ENCODE measurements at regions of chr4 and their contacts with region 1.

Region 1: GRCh38 chr4:101037938-101038413 is 309.4 kb downstream of the PPP3CA start:
- DNase-seq: peak in 1 of 2 donors; percentile 14
- ATAC-seq: peak in 7 of 8 donors; percentile 46 to 94 (median 80)
- H3K4me3 ChIP-seq: no peak overlapping the region
- H3K27ac ChIP-seq: peak overlapping the region in 2 of 10 donors; percentile 20 to 40
- H3K4me1 ChIP-seq: peaks cover 0 to 20% (median 11%) of the 10 kb centered on the region in 9 donors
- H3K27me3 ChIP-seq: no peaks in the 10 kb centered on the region
- CTCF ChIP-seq: no peak

Region 2: DNA sequence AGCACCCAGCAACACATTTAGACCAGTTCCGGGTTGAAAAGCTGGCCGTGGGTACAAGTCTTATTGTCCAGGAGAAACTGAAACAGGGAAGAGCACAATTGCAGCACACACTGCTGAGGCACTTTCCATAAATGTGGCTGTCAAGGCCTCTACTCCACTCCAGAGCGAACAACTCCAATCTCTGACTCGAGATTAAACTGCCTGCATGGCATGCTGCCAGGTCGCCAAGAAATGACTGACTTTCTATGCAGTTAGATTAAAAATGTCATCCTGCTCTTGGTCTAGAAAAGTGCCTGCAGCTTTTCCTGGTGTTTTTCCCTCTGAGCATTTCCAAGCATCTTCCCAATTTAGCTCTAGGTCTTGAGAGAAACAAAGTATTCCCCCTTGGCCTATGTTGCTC is 259.5 kb before region 1 on chr4:
- intact Hi-C with region 1: loop called in 1 of 10 experiments (anchors 5 kb)
- DNase-seq: no peak
- ATAC-seq: no peak
- H3K4me3 ChIP-seq: no peak overlapping the region
- H3K27ac ChIP-seq: no peak overlapping the region
- H3K4me1 ChIP-seq: no peaks in the 10 kb centered on the region
- H3K27me3 ChIP-seq: no peaks in the 10 kb centered on the region
- CTCF ChIP-seq: no peak

Measured in heart right ventricle (tissue), 16 donors.